Gastrocnemius medialis (tissue), 4 donors: ENCODE measurements at regions of chr9 and their contacts with region 1.

Region 1: GRCh38 chr9:35790385-35791296 is 750 bp upstream of the NPR2 start:
- DNase-seq: peak; percentile 63 to 71
- ATAC-seq: peak; percentile 80 to 84
- H3K4me3 ChIP-seq: peak overlapping the region; percentile 67 to 73 (median 69)
- H3K27ac ChIP-seq: peak overlapping the region; percentile 81 to 88 (median 84)
- H3K4me1 ChIP-seq: peaks cover 29 to 34% of the 10 kb centered on the region in 2 donors
- H3K27me3 ChIP-seq: no peaks in the 10 kb centered on the region
- CTCF ChIP-seq: peak; percentile 80 to 92 (median 85)
- POLR2A ChIP-seq: no peak

Region 2: GRCh38 chr9:35814841-35815543 is 24.4 kb after region 1 on chr9 and contains the start of gene HINT2:
- in situ Hi-C with region 1: no loop called
- intact Hi-C with region 1: loop called (anchors 1 kb)
- DNase-seq: peak; percentile 95 to 98
- ATAC-seq: peak; percentile 87 to 95
- H3K4me3 ChIP-seq: peak within 1 kb of the TSS; percentile 78 to 93 (median 84)
- H3K27ac ChIP-seq: peak within 1 kb of the TSS; percentile 95 to 98 (median 96)
- H3K4me1 ChIP-seq: peaks cover 30 to 34% of the 10 kb centered on the region in 2 donors
- H3K27me3 ChIP-seq: no peaks in the 10 kb centered on the region
- CTCF ChIP-seq: peak in 1 of 5 experiments; percentile 3
- POLR2A ChIP-seq: peak; percentile 92 to 94
- total RNA-seq, gene HINT2: 4.5 to 26.7 (median 22.0) TPM

Region 3: GRCh38 chr9:35829084-35829763 is 38.6 kb after region 1 on chr9 and contains the start of gene TMEM8B:
- in situ Hi-C with region 1: no loop called
- intact Hi-C with region 1: loop called (anchors 1 kb)
- DNase-seq: peak; percentile 96 to 97
- ATAC-seq: peak; percentile 92 to 93
- H3K4me3 ChIP-seq: peak within 1 kb of the TSS; percentile 68 to 96 (median 90)
- H3K27ac ChIP-seq: peak within 1 kb of the TSS; percentile 88 to 98 (median 98)
- H3K4me1 ChIP-seq: peaks cover 32 to 53% of the 10 kb centered on the region in 2 donors
- H3K27me3 ChIP-seq: no peaks in the 10 kb centered on the region
- CTCF ChIP-seq: no peak
- POLR2A ChIP-seq: peak; percentile 53 to 67
- total RNA-seq, gene TMEM8B: 1.9 to 6.4 (median 6.1) TPM

Region 4: DNA sequence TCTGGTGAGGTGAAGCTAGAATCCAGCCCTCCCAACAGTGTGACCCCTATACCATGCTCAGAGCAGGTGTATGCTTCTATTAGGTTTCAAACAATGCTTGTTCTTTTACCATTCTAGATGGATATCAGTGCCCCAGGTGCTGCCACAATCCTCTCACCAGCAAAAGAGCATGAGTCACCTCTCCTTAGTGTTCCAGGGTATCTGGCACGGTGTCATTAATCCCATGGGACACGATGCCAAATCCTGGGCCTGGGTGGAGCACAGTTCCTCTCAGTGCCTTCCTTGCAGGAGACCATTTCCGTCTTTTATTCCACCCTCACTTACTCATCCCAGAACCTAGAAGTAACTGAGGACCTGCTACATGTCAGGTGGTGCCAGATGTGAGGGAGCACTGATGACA is 80.9 kb after region 1 on chr9:
- in situ Hi-C with region 1: loop called in 1 of 4 experiments (anchors 10 kb)
- intact Hi-C with region 1: no loop called
- DNase-seq: no peak
- ATAC-seq: no peak
- H3K4me3 ChIP-seq: no peak overlapping the region
- H3K27ac ChIP-seq: no peak overlapping the region
- H3K4me1 ChIP-seq: no peaks in the 10 kb centered on the region
- H3K27me3 ChIP-seq: peaks cover 0 to 7% (median 0%) of the 10 kb centered on the region in 3 donors
- CTCF ChIP-seq: no peak
- POLR2A ChIP-seq: no peak

Region 5: GRCh38 chr9:35882263-35882848 is 91.7 kb after region 1 on chr9:
- in situ Hi-C with region 1: loop called (anchors 5 to 10 kb)
- intact Hi-C with region 1: loop called (anchors 1 kb)
- DNase-seq: peak; percentile 57 to 77
- ATAC-seq: peak; percentile 90 to 92
- H3K4me3 ChIP-seq: no peak overlapping the region
- H3K27ac ChIP-seq: no peak overlapping the region
- H3K4me1 ChIP-seq: no peaks in the 10 kb centered on the region
- H3K27me3 ChIP-seq: no peaks in the 10 kb centered on the region
- CTCF ChIP-seq: peak; percentile 88 to 98 (median 92)
- POLR2A ChIP-seq: no peak

Region 6: GRCh38 chr9:36023260-36024048 is 232.8 kb after region 1 on chr9:
- in situ Hi-C with region 1: no loop called
- intact Hi-C with region 1: no loop called
- DNase-seq: peak; percentile 13 to 36
- ATAC-seq: peak; percentile 74 to 76
- H3K4me3 ChIP-seq: no peak overlapping the region
- H3K27ac ChIP-seq: no peak overlapping the region
- H3K4me1 ChIP-seq: no peaks in the 10 kb centered on the region
- H3K27me3 ChIP-seq: no peaks in the 10 kb centered on the region
- CTCF ChIP-seq: peak; percentile 36 to 81 (median 72)
- POLR2A ChIP-seq: no peak